ENCODE measurements at regions of chr11 and their contacts with region 1.

Region 1: GRCh38 chr11:64778508-64779346 is at the start of gene SF1:
- DNase-seq: peak; percentile 96 to 100
- ATAC-seq: peak; percentile 94 to 97 (median 96)
- H3K4me3 ChIP-seq: peak within 1 kb of the TSS; percentile 65 to 99 (median 89)
- H3K27ac ChIP-seq: peak within 1 kb of the TSS; percentile 98 to 100 (median 100)
- H3K4me1 ChIP-seq: peaks cover 20 to 48% (median 42%) of the 10 kb centered on the region in 9 donors
- H3K27me3 ChIP-seq: no peaks in the 10 kb centered on the region
- CTCF ChIP-seq: peak in 6 of 9 donors; percentile 16 to 52 (median 36)
- total RNA-seq, gene SF1: 149 to 201 (median 165) TPM

Region 2: GRCh38 chr11:64629796-64630562 is 148.7 kb before region 1 on chr11:
- intact Hi-C with region 1: no loop called
- DNase-seq: peak in 1 of 2 donors; percentile 34
- ATAC-seq: peak in 1 of 8 donors; percentile 58
- H3K4me3 ChIP-seq: no peak overlapping the region
- H3K27ac ChIP-seq: no peak overlapping the region
- H3K4me1 ChIP-seq: peaks cover 0 to 9% (median 0%) of the 10 kb centered on the region in 9 donors
- H3K27me3 ChIP-seq: peaks cover 0 to 40% (median 20%) of the 10 kb centered on the region in 7 donors
- CTCF ChIP-seq: no peak

Region 3: DNA sequence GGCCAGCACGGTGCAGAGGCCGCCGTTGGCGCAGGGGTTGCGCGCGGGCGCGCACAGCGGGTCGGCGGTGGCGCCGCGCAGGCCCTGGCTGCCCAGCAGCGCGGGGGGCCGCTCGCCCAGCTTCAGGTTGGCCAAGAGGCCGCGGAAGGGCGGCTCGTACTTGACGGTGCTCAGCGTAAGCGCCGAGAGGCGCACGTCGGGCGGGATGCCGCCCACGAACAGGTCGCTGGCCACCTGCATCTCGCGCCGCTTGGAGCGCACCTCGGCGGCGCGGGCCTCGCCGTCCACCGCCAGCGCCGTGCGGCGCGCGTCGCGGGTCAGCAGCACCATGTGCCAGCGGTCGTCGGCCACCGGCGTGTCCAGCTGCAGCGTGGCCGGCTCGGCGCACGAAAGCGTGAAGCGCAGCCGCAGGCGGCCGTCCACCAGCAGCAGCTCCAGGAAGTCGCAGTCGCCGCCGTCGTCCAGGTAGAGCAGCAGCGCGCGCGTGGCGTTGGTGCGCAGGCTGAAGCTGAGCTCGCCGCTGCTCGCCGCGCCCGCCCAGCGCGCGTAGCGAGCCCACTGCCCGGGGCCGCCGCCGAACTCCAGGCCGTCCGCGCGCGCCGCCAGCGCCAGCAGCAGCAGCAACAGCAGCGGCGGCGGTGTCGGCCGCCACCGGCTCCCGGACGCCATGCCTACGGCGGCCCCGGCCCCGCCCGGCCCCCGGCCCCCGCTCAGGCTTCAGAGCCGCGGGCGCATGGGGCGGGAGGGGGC is 65.5 kb before region 1 on chr11:
- intact Hi-C with region 1: no loop called
- DNase-seq: peak in 1 of 2 donors; percentile 45
- ATAC-seq: peak in 2 of 8 donors; percentile 26 to 57
- H3K4me3 ChIP-seq: peak overlapping the region in 1 of 10 donors; percentile 7
- H3K27ac ChIP-seq: no peak overlapping the region
- H3K4me1 ChIP-seq: peaks cover 0 to 8% (median 0%) of the 10 kb centered on the region in 9 donors
- H3K27me3 ChIP-seq: peaks cover 32 to 100% (median 98%) of the 10 kb centered on the region in 7 donors
- CTCF ChIP-seq: no peak

Region 4: GRCh38 chr11:64742889-64743590 is 35.7 kb before region 1 on chr11:
- intact Hi-C with region 1: loop called in 1 of 10 experiments (anchors 5 kb)
- DNase-seq: peak; percentile 77 to 88
- ATAC-seq: peak; percentile 35 to 64 (median 52)
- H3K4me3 ChIP-seq: peak overlapping the region; percentile 43 to 80 (median 68)
- H3K27ac ChIP-seq: peak overlapping the region; percentile 82 to 99 (median 96)
- H3K4me1 ChIP-seq: peaks cover 16 to 44% (median 41%) of the 10 kb centered on the region in 9 donors
- H3K27me3 ChIP-seq: no peaks in the 10 kb centered on the region
- CTCF ChIP-seq: peak; percentile 83 to 92 (median 88)

Region 5: GRCh38 chr11:64764040-64764611 is 14.6 kb before region 1 on chr11:
- intact Hi-C with region 1: loop called in 1 of 10 experiments (anchors 1 kb)
- DNase-seq: no peak
- ATAC-seq: peak in 3 of 8 donors; percentile 2 to 7 (median 6)
- H3K4me3 ChIP-seq: no peak overlapping the region
- H3K27ac ChIP-seq: peak overlapping the region in 9 of 10 donors; percentile 65 to 87 (median 78)
- H3K4me1 ChIP-seq: peaks cover 36 to 90% (median 72%) of the 10 kb centered on the region in 9 donors
- H3K27me3 ChIP-seq: no peaks in the 10 kb centered on the region
- CTCF ChIP-seq: no peak

Region 6: DNA sequence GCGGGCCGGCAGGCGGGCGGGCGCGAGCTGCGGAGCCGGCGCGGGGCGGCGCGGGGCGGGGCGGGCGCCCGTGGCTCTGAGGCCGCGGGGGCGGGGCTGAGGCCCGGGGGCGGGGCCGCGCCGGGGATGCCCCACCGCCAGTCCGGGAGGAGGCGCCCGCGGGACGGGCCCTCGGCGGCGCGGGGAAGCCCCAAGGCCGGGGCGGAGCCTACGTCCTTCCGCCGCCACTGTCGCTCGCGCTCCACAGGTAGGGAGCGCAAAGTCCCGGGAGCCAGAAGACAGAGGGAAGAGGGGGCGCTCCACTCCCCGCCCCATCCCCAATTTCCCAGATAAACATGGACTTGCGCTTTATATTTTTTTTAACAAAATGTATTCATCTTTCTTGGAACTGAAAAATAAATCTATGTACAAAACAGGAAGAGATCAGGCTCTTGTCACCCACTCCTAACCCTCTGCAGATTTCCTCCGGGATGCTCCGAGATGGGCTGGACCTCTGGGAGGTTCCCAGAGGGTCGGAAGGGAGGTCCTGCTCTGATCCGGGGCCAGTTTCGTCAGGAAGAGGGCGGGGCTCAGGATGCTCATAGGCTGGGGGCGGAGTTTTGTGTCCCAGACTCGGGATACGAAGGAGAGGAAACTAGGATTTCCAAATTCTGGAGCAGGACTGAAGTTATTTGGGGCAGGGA is 24.6 kb after region 1 on chr11 and contains the start of gene MAP4K2:
- intact Hi-C with region 1: loop called in 1 of 10 experiments (anchors 2 kb)
- DNase-seq: peak; percentile 90 to 93
- ATAC-seq: peak; percentile 77 to 94 (median 90)
- H3K4me3 ChIP-seq: peak within 1 kb of the TSS; percentile 56 to 92 (median 68)
- H3K27ac ChIP-seq: peak within 1 kb of the TSS; percentile 65 to 97 (median 92)
- H3K4me1 ChIP-seq: peaks cover 14 to 46% (median 26%) of the 10 kb centered on the region in 9 donors
- H3K27me3 ChIP-seq: no peaks in the 10 kb centered on the region
- CTCF ChIP-seq: peak in 6 of 9 donors; percentile 10 to 56 (median 32)
- total RNA-seq, gene MAP4K2: 4.6 to 11.3 (median 8.1) TPM

Region 7: GRCh38 chr11:64834723-64835620 is 56.2 kb after region 1 on chr11:
- intact Hi-C with region 1: no loop called
- DNase-seq: no peak
- ATAC-seq: no peak
- H3K4me3 ChIP-seq: no peak overlapping the region
- H3K27ac ChIP-seq: no peak overlapping the region
- H3K4me1 ChIP-seq: no peaks in the 10 kb centered on the region
- H3K27me3 ChIP-seq: no peaks in the 10 kb centered on the region
- CTCF ChIP-seq: no peak

Region 8: DNA sequence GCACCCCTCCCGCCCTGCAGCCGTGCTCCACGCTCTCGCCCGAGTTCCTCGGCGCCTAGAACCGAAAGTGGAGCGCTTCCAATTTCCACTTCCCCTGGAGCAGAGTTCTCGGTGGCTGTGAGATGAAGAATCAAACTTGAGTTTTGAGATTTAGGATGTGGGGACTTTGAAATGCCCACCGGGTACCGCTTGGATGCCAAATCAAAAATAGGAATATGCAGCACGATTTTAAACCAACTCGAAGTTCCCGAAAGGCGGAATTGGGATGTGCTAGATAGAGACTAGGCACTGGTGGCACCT is 483.6 kb after region 1 on chr11:
- intact Hi-C with region 1: no loop called
- DNase-seq: peak in 1 of 2 donors; percentile 54
- ATAC-seq: peak in 5 of 8 donors; percentile 51 to 68 (median 52)
- H3K4me3 ChIP-seq: peak overlapping the region; percentile 51 to 90 (median 74)
- H3K27ac ChIP-seq: peak overlapping the region in 9 of 10 donors; percentile 79 to 96 (median 90)
- H3K4me1 ChIP-seq: peaks cover 4 to 21% (median 11%) of the 10 kb centered on the region in 9 donors
- H3K27me3 ChIP-seq: no peaks in the 10 kb centered on the region
- CTCF ChIP-seq: no peak